ENCODE measurements at regions of chr6 and their contacts with region 1.

Region 1: DNA sequence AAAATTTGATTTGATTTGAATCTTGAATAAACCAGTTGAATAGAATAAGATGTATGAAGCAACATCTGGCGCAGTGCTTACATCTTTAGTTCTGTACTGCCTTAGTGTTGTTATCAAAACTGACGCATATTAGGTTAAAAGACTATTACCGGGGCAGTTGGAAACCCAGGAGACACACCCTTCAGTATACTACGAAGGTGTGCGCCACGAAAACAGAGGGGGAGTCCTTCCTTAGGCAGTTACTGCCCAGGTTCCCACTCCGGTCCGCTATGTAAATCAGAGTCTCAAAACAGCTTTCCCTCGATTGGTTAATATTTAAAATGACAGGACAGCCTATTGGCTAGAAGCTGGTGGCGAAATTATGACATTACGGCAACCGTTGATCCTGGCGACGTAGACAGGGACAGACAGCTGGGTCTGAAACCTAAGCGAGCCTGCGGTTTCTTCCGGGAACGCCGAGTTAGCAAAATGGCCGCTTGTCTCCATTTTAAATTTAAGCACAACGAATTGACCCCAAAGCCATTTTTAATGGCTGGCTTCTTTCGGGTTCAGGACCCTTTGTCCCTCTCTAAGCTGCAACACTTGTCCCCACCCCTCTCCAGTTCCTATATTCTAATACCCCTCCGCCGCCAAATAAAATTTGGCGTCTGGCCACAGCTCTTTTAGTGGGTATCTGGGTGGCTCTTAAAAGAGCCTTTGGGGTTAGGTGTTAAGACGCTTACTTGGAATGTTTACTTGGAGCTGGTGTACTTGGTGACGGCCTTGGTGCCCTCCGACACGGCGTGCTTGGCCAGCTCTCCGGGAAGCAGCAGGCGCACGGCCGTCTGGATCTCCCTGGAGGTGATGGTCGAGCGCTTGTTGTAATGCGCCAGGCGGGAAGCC is 35.8 kb downstream of the HFE start:
- DNase-seq: peak; percentile 76
- ATAC-seq: peak; percentile 58
- H3K4me3 Mint-ChIP-seq: peak overlapping the region; percentile 99
- H3K27ac Mint-ChIP-seq: peak overlapping the region; percentile 100
- H3K4me1 Mint-ChIP-seq: peaks cover 40% of the 10 kb centered on the region
- H3K27me3 Mint-ChIP-seq: no peaks in the 10 kb centered on the region

Region 2: GRCh38 chr6:24340998-24341938 is 1781.8 kb before region 1 on chr6:
- POLR2A ChIA-PET with region 1: no interaction called
- DNase-seq: no peak
- ATAC-seq: no peak
- H3K4me3 Mint-ChIP-seq: no peak overlapping the region
- H3K27ac Mint-ChIP-seq: no peak overlapping the region
- H3K4me1 Mint-ChIP-seq: no peaks in the 10 kb centered on the region
- H3K27me3 Mint-ChIP-seq: peaks cover 18% of the 10 kb centered on the region

Region 3: GRCh38 chr6:26065952-26066380 is 57.1 kb before region 1 on chr6:
- POLR2A ChIA-PET with region 1: interaction called, 72 read pairs
- DNase-seq: no peak
- ATAC-seq: peak; percentile 89
- H3K4me3 Mint-ChIP-seq: no peak overlapping the region
- H3K27ac Mint-ChIP-seq: no peak overlapping the region
- H3K4me1 Mint-ChIP-seq: peaks cover 8% of the 10 kb centered on the region
- H3K27me3 Mint-ChIP-seq: peaks cover 26% of the 10 kb centered on the region

Region 4: DNA sequence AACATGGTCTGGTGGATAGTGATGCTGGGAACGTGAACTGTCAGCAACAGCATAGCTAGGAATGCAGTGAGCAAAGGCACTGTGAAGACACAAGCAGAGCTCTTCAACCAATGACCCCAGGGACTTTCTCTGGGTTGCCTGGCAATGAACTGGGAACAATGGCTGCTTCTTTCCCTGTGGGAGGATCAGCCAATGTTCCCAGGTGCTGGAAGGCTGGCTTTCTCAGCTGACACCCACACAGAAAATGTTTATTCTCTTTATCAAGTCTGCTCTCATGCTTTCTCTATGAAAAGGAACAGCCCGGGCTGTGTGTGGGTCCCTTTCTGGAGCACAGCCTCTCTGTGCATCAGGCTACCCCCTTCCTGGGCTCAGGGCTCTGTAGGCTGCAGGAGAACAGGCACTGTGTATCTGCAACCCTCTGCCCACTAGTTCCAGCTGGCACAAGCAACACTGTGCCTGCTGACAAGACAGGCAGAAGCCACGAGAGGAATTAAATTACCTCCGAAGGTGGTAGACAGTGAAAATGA is 18.4 kb after region 1 on chr6:
- POLR2A ChIA-PET with region 1: interaction called, 33 read pairs
- DNase-seq: no peak
- ATAC-seq: no peak
- H3K4me3 Mint-ChIP-seq: no peak overlapping the region
- H3K27ac Mint-ChIP-seq: no peak overlapping the region
- H3K4me1 Mint-ChIP-seq: peaks cover 10% of the 10 kb centered on the region
- H3K27me3 Mint-ChIP-seq: no peaks in the 10 kb centered on the region

Region 5: GRCh38 chr6:26196846-26197648 is 74.0 kb after region 1 on chr6:
- POLR2A ChIA-PET with region 1: interaction called, 396 read pairs
- DNase-seq: peak; percentile 83
- ATAC-seq: peak; percentile 44
- H3K4me3 Mint-ChIP-seq: peak overlapping the region; percentile 87
- H3K27ac Mint-ChIP-seq: peak overlapping the region; percentile 96
- H3K4me1 Mint-ChIP-seq: peaks cover 48% of the 10 kb centered on the region
- H3K27me3 Mint-ChIP-seq: no peaks in the 10 kb centered on the region

Region 6: GRCh38 chr6:26249957-26250697 is 127.1 kb after region 1 on chr6:
- POLR2A ChIA-PET with region 1: interaction called, 52 read pairs
- DNase-seq: peak; percentile 79
- ATAC-seq: peak; percentile 53
- H3K4me3 Mint-ChIP-seq: peak overlapping the region; percentile 90
- H3K27ac Mint-ChIP-seq: peak overlapping the region; percentile 99
- H3K4me1 Mint-ChIP-seq: peaks cover 16% of the 10 kb centered on the region
- H3K27me3 Mint-ChIP-seq: no peaks in the 10 kb centered on the region

Region 7: GRCh38 chr6:27146706-27147505 is 1023.9 kb after region 1 on chr6:
- POLR2A ChIA-PET with region 1: interaction called, 14 read pairs
- DNase-seq: peak; percentile 83
- ATAC-seq: peak; percentile 71
- H3K4me3 Mint-ChIP-seq: no peak overlapping the region
- H3K27ac Mint-ChIP-seq: no peak overlapping the region
- H3K4me1 Mint-ChIP-seq: peaks cover 18% of the 10 kb centered on the region
- H3K27me3 Mint-ChIP-seq: no peaks in the 10 kb centered on the region

Region 8: DNA sequence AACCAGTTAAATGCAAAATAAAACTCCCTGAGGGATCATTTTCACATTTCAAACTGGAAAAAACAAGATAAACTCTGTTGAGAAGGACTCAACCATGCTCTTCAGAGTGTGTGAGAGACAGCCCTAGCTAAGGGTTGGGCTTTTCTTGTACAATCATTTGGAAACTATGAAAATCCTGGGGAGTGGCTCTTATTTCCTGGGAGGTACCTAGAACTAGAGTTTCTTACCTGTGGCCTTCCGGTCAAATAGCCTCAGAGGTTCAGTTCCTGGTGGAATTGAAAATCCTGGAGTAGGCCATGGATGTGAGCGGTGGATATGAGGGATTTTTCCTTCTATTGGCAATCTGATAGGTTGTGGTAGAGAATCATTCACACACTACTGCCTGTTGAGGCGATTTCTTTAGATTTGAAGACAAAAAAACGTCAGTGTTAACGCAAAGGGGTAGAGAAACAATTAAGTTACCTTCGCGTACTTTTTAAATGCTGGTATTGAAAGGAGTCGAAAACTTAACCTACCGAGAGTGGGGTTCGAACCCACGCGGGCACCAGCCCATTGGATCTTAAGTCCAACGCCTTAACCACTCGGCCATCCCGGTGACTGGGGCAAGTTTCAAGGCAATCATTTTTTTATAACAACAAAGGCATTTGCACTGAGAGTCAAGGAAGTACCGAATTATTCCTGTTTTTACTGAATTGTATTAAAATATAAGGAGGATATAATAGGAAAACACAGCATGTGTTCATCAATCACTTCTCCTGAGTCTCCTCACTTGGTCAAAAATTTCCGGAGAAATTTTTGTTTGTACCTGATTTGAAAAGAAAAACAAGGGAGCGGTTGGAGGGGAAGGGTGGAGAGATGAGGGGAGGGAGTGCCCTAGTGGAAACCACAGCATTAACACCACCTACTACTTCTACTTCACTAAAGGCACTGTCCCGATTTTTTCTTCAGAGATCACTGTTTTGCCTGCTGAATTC is 1597.9 kb after region 1 on chr6:
- POLR2A ChIA-PET with region 1: no interaction called
- DNase-seq: no peak
- ATAC-seq: no peak
- H3K4me3 Mint-ChIP-seq: peak overlapping the region; percentile 42
- H3K27ac Mint-ChIP-seq: no peak overlapping the region
- H3K4me1 Mint-ChIP-seq: peaks cover 12% of the 10 kb centered on the region
- H3K27me3 Mint-ChIP-seq: peaks cover 30% of the 10 kb centered on the region

Region 9: GRCh38 chr6:27893059-27893835 is 1770.2 kb after region 1 on chr6:
- POLR2A ChIA-PET with region 1: interaction called, 21 read pairs
- DNase-seq: peak; percentile 82
- ATAC-seq: peak; percentile 55
- H3K4me3 Mint-ChIP-seq: no peak overlapping the region
- H3K27ac Mint-ChIP-seq: no peak overlapping the region
- H3K4me1 Mint-ChIP-seq: peaks cover 43% of the 10 kb centered on the region
- H3K27me3 Mint-ChIP-seq: no peaks in the 10 kb centered on the region